ENCODE measurements at regions of chr4 and their contacts with region 1.

Region 1: DNA sequence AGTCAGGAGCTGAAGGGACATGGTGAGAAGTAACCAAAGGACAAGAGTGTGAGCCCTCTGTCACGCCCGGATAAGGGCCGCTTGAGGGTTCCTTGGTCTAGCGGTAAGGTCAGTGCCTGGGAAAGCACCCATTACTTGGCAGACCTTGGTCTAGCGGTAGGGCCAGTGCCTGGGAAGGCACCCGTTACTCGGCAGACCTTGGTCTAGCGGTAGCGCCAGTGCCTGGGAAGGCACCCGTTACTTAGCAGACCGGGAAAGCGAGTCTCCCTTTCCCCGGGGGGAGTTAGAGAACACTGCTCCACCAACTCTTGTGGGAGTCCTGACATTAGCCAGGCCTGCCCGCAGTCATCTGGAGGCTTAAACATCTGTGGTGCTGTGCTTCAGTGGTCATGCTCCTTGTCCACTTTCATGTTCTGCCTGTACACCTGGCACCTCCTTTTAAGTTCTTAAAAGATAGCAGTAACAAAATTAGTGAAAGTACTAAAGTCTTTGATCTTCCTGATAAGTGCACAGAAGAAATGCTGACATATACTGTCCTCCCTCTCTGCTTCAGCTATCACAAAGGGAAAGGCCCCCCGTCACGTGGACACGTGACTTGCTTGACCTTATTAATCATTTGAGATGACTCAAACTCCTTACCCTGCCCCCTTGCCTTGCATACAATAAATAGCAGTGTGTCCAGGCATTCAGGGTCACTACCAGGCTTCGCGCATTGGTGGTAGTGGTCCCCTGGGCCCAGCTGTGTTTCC is 9.3 kb upstream of the SEC24B start:
- DNase-seq: no peak
- ATAC-seq: no peak
- H3K4me3 ChIP-seq: no peak overlapping the region
- H3K4me3 Mint-ChIP-seq: no peak overlapping the region
- H3K27ac ChIP-seq: no peak overlapping the region
- H3K27ac Mint-ChIP-seq: no peak overlapping the region
- H3K4me1 ChIP-seq: peaks cover 4% of the 10 kb centered on the region
- H3K4me1 Mint-ChIP-seq: peaks cover 6% of the 10 kb centered on the region in 2 donors
- H3K27me3 ChIP-seq: no peaks in the 10 kb centered on the region
- H3K27me3 Mint-ChIP-seq: no peaks in the 10 kb centered on the region
- CTCF ChIP-seq: no peak

Region 2: DNA sequence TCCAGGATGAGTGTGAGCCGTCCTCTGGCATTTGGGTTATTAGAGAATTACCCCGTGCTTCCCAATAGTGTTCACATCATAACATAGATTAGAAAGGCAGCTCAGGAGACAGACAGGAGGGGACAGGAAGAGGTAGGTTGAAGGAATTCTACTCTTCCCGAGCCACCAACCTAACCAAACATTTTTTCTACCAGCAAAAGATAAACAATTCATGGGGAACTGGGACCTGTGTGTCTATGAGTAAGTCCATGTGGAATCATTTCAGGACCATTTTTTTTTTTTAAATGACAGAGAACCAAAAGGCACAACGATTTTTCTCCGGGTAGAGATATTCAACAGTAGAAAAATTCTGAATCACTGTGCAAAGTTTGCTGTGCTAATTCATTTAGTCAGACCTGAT is 487.2 kb before region 1 on chr4:
- intact Hi-C with region 1: no loop called
- DNase-seq: no peak
- ATAC-seq: no peak
- H3K4me3 ChIP-seq: no peak overlapping the region
- H3K4me3 Mint-ChIP-seq: no peak overlapping the region
- H3K27ac ChIP-seq: no peak overlapping the region
- H3K27ac Mint-ChIP-seq: no peak overlapping the region
- H3K4me1 ChIP-seq: no peaks in the 10 kb centered on the region
- H3K4me1 Mint-ChIP-seq: no peaks in the 10 kb centered on the region
- H3K27me3 ChIP-seq: no peaks in the 10 kb centered on the region
- H3K27me3 Mint-ChIP-seq: no peaks in the 10 kb centered on the region
- CTCF ChIP-seq: no peak

Region 3: DNA sequence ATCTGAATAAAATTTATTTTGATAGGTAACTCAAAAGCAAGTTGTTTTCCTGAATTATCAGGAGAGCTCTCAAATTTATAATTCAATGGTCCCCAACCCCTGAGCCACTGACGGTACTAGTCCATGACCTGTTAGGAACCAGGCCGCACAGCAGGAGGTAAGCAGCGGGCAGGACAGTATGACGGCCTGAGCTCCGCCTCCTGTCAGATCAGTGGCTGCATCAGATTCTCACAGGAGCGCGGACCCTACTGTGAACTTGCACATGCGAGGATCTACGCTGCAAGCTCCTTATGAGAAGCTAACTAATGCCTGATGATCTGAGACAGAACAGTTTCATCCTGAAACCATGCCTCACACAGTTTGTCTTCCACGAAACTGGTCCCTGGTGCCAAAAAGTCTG is 28.6 kb before region 1 on chr4:
- intact Hi-C with region 1: no loop called
- DNase-seq: no peak
- ATAC-seq: no peak
- H3K4me3 ChIP-seq: no peak overlapping the region
- H3K4me3 Mint-ChIP-seq: no peak overlapping the region
- H3K27ac ChIP-seq: no peak overlapping the region
- H3K27ac Mint-ChIP-seq: no peak overlapping the region
- H3K4me1 ChIP-seq: no peaks in the 10 kb centered on the region
- H3K4me1 Mint-ChIP-seq: no peaks in the 10 kb centered on the region
- H3K27me3 ChIP-seq: peaks cover 11% of the 10 kb centered on the region
- H3K27me3 Mint-ChIP-seq: peaks cover 21 to 44% of the 10 kb centered on the region in 2 donors
- CTCF ChIP-seq: no peak

Region 4: GRCh38 chr4:109702950-109703663 is 278.8 kb after region 1 on chr4 and contains the start of gene CASP6:
- intact Hi-C with region 1: loop called (anchors 1 kb)
- DNase-seq: peak; percentile 66 to 87
- ATAC-seq: peak; percentile 92
- H3K4me3 ChIP-seq: peak within 1 kb of the TSS; percentile 66
- H3K4me3 Mint-ChIP-seq: peak within 1 kb of the TSS; percentile 98
- H3K27ac ChIP-seq: peak within 1 kb of the TSS; percentile 29
- H3K27ac Mint-ChIP-seq: peak within 1 kb of the TSS; percentile 85 to 92
- H3K4me1 ChIP-seq: peaks cover 17% of the 10 kb centered on the region
- H3K4me1 Mint-ChIP-seq: peaks cover 25 to 30% of the 10 kb centered on the region in 2 donors
- H3K27me3 ChIP-seq: no peaks in the 10 kb centered on the region
- H3K27me3 Mint-ChIP-seq: peaks cover 0 to 4% of the 10 kb centered on the region in 2 donors
- CTCF ChIP-seq: peak; percentile 71
- total RNA-seq, gene CASP6: 3.4 to 6.0 (median 4.8) TPM

Region 5: DNA sequence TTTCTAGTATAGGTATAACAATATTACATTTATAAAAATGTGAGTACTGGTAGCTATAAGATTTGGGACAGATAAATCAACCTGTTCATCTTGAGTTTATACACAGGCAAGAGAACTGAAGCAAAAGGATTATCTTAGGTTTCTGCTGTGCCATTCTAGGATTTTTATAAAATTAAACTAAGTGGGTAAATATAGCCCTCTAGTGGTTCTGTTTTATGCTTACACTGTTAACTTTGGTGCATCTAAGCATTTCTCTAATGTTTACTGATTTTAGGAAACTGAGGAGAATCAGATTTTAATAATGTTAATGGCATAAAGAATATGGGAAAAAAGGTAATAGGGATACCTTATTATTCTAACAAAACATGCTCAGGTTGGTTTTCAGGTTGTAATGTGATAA is 402.5 kb after region 1 on chr4:
- intact Hi-C with region 1: loop called (anchors 1 kb)
- DNase-seq: peak in 1 of 2 donors; percentile 46
- ATAC-seq: peak; percentile 44 to 64 (median 57)
- H3K4me3 ChIP-seq: no peak overlapping the region
- H3K4me3 Mint-ChIP-seq: no peak overlapping the region
- H3K27ac ChIP-seq: no peak overlapping the region
- H3K27ac Mint-ChIP-seq: no peak overlapping the region
- H3K4me1 ChIP-seq: no peaks in the 10 kb centered on the region
- H3K4me1 Mint-ChIP-seq: no peaks in the 10 kb centered on the region
- H3K27me3 ChIP-seq: no peaks in the 10 kb centered on the region
- H3K27me3 Mint-ChIP-seq: no peaks in the 10 kb centered on the region
- CTCF ChIP-seq: peak; percentile 64

Region 6: DNA sequence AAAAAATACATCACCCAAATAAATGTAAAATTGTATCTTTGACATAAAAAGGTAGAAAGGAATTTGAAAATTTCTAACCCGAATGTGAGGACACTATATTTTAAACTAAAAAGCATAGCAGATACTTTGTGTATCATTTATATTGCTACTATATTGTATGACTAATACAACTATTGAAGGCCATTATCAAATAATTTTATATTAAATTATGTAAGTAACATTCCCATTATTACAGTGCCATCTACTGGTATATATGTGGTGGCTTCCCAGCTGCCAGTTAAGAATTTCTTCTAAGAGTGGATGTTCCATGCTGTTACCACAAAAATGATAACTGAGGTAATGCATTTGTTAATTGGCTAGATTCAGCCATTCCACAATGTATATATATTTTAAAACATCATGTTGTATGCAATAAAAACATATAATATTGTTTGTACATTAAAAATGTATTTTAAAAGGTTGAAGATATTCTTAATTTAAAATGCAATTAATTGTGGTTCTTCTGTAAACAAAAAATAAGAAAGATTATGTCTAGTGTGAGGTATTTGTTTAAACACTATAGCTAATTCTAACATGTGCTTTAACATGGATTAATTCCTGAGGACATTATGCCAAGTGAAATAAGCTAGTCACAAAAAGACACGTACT is 553.7 kb after region 1 on chr4:
- intact Hi-C with region 1: loop called (anchors 1 kb)
- DNase-seq: peak in 1 of 2 donors; percentile 52
- ATAC-seq: peak in 1 of 3 donors; percentile 45
- H3K4me3 ChIP-seq: no peak overlapping the region
- H3K4me3 Mint-ChIP-seq: no peak overlapping the region
- H3K27ac ChIP-seq: no peak overlapping the region
- H3K27ac Mint-ChIP-seq: no peak overlapping the region
- H3K4me1 ChIP-seq: no peaks in the 10 kb centered on the region
- H3K4me1 Mint-ChIP-seq: peaks cover 6% of the 10 kb centered on the region in 2 donors
- H3K27me3 ChIP-seq: no peaks in the 10 kb centered on the region
- H3K27me3 Mint-ChIP-seq: peaks cover 6 to 23% of the 10 kb centered on the region in 2 donors
- CTCF ChIP-seq: peak; percentile 39

Measured in natural killer cell (primary cell).